GM13976 (cell line): ENCODE measurements at regions of chr9 and their contacts with region 1.

Region 1: GRCh38 chr9:98255578-98256296 is at the start of gene TBC1D2:
- DNase-seq: peak; percentile 99
- CTCF ChIP-seq: no peak

Region 2: GRCh38 chr9:98074115-98074990 is 181.4 kb before region 1 on chr9:
- in situ Hi-C with region 1: loop called (anchors 5 kb)
- DNase-seq: peak; percentile 77
- CTCF ChIP-seq: peak; percentile 88

Region 3: GRCh38 chr9:98201102-98201501 is 54.6 kb before region 1 on chr9:
- in situ Hi-C with region 1: no loop called
- DNase-seq: peak; percentile 81
- CTCF ChIP-seq: no peak